Activated naive CD4-positive, alpha-beta T cell treated with anti-CD3 and anti-CD28 coated beads for 36 hours (primary cell): ENCODE measurements at regions of chr4 and their contacts with region 1.

Region 1: GRCh38 chr4:147096667-147097604 is 151.3 kb upstream of the TTC29 start:
- DNase-seq: no peak
- H3K4me3 Mint-ChIP-seq: no peak overlapping the region
- H3K27ac Mint-ChIP-seq: no peak overlapping the region
- H3K4me1 Mint-ChIP-seq: no peaks in the 10 kb centered on the region
- H3K27me3 Mint-ChIP-seq: peaks cover 8% of the 10 kb centered on the region

Region 2: DNA sequence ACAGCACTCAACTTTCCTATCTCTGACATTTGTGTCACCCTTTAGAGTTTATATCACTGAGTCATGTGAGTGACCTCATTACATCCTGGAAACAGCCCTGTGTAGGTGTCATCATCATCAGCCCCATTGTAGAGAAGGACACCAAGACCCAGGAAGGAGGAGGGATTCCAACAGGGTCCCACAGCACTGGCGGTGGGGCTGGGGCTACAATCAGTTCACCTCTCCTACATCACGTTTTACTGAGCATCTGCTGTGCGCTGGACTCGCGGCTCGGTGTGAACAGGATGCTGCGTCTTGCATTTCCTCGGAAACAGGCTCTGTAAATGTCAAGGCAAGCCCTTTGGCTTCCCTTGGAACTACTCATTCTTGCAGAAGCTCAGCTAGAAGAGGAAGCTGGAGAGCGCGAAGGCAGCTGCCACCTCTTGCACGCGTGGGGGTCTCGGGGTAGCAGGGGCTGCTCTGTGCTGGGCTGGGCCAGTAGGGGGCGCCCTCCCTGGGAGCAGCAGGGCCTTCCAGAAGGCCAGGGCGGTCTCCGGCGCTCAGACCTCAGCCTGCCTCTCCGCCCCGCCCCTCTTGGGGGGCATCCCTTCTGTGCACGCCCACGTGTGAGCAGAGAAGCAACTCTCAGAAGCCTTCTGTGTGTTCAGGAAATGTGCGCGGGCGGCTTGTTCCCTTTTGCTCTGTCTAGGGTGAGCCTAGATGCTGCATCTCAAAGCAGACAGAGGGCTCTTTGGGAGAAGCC is 853.6 kb before region 1 on chr4:
- CTCF ChIA-PET with region 1: interaction called, 4 read pairs
- intact Hi-C with region 1: loop called (anchors 1 kb)
- DNase-seq: peak; percentile 71
- H3K4me3 Mint-ChIP-seq: peak overlapping the region; percentile 63
- H3K27ac Mint-ChIP-seq: peak overlapping the region; percentile 77
- H3K4me1 Mint-ChIP-seq: peaks cover 35% of the 10 kb centered on the region
- H3K27me3 Mint-ChIP-seq: peaks cover 3% of the 10 kb centered on the region

Region 3: DNA sequence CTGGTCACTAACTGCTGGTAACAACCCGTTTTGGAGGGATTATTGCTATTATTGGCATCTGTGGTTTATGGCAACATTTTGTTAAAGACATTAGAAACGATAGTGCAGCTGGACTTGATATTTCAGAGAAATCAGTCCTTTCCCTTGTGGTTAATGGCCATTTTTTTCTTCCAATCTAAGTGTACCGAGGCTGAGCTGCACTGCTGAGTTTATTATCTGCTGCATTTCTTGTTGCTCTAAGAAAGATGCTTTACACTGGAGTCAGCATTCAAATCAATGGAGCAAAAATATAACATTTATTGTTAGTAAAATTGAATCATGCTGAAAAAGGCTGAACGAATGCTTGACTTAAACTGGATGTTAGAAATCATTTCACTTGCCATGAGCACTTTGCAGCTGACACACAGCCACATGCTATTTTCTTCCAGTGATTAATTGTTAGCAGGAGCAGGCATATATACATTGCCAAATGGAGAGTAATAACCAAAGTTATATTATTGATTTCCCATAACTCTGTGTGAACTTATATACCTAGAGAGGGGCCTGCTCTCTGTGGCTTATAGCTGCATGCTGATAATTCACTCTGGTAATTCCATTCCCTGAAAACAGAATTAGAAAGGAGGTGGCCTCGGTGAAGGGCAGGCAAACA is 84.8 kb before region 1 on chr4:
- CTCF ChIA-PET with region 1: interaction called, 98 read pairs
- intact Hi-C with region 1: no loop called
- DNase-seq: no peak
- H3K4me3 Mint-ChIP-seq: no peak overlapping the region
- H3K27ac Mint-ChIP-seq: no peak overlapping the region
- H3K4me1 Mint-ChIP-seq: no peaks in the 10 kb centered on the region
- H3K27me3 Mint-ChIP-seq: peaks cover 8% of the 10 kb centered on the region

Region 4: DNA sequence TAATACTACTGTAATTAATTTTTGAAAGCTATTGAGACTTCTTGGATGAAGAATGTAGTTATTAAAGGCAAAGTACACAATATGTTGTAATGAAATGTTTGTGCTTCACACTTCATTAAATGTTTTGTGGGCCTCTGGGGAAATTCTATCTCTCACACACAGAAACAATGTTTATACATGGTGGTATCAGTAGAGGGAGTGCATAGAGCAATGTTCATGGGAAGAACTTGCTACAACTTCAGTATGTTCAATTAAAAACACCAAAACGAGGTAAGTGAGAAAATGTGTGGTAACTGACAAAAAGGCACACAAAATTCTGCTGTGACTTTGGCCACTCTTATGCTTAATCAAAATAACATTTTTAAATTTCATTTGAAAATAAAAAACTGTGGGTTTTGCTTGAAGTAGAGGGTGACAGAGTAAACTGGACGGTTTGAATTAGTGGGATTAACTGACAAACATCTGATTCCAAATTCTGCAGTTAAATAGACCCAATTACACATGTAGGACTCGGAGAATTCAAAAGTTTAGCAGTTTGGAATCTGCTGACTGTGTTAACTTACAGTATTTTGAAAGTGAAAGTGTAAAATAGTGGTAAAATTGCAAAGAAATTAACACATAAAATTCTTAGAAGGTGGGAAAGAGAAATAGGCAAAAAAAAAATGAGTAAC is 39.9 kb before region 1 on chr4:
- CTCF ChIA-PET with region 1: interaction called, 6 read pairs
- intact Hi-C with region 1: loop called (anchors 2 kb)
- DNase-seq: no peak
- H3K4me3 Mint-ChIP-seq: peak overlapping the region; percentile 70
- H3K27ac Mint-ChIP-seq: peak overlapping the region; percentile 72
- H3K4me1 Mint-ChIP-seq: peaks cover 5% of the 10 kb centered on the region
- H3K27me3 Mint-ChIP-seq: peaks cover 3% of the 10 kb centered on the region

Region 5: GRCh38 chr4:147136310-147136709 is 39.4 kb after region 1 on chr4:
- CTCF ChIA-PET with region 1: no interaction called
- intact Hi-C with region 1: no loop called
- DNase-seq: no peak
- H3K4me3 Mint-ChIP-seq: no peak overlapping the region
- H3K27ac Mint-ChIP-seq: no peak overlapping the region
- H3K4me1 Mint-ChIP-seq: no peaks in the 10 kb centered on the region
- H3K27me3 Mint-ChIP-seq: peaks cover 6% of the 10 kb centered on the region